ENCODE measurements at regions of chr17 and their contacts with region 1.

Region 1: DNA sequence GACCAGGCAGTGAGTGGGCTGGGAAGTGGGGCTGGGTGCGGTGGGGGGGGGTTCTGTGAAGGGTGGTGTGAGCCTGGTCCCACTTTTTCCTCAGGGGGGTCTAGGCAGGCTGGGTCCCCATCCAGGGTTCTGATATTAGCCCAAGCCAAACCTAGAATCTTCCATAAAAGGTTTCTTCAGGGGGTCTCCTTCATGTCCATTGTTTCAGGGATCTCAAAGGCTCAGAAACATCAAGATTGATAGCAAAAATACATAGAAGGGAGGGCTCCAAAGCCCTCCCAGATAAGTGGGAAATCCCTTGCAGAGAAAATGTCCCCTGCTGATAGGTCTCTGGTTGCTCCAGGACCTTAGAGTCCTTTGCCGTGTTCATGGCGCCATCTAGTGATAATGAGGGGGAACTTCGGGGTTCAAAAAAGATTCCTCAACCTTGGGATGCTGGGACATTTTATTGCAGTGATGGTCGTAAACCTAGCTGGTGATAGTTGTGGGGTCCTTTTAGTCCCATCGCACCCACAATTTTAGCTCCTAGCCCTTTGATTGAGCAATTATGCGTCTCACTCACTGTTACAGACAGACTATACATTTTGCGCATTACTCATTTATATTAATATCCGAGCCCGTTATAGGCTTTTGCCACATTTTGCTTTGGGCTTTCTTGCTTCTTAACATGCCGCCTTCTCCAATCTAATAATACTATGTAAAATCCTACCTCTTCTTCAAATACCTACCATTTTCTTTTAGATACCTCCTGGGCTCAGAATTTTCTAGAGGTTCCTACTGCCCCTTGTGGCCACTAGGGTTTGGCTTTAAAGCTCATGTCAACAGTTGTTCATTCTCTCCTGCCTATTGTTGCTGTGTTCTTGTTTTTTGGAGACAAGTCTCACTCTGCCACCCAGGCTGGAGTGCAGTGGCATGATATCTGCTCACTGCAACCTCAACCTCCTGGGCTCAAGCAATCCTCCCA is 35.1 kb downstream of the IGF2BP1 start:
- DNase-seq: no peak

Region 2: GRCh38 chr17:48678141-48678971 is 353.9 kb before region 1 on chr17:
- intact Hi-C with region 1: loop called (anchors 10 kb)
- DNase-seq: peak; percentile 78

Region 3: GRCh38 chr17:48804925-48805411 is 227.3 kb before region 1 on chr17:
- intact Hi-C with region 1: loop called (anchors 5 kb)
- DNase-seq: peak; percentile 78

Region 4: GRCh38 chr17:48892940-48893645 is 139.2 kb before region 1 on chr17:
- intact Hi-C with region 1: loop called (anchors 10 kb)
- DNase-seq: no peak

Region 5: GRCh38 chr17:49076573-49077384 is 44.5 kb after region 1 on chr17:
- intact Hi-C with region 1: no loop called
- DNase-seq: no peak

Measured in cardiac septum (tissue), 1 donor.